SK-N-SH (cell line): ENCODE measurements at regions of chr1 and their contacts with region 1.

Region 1: DNA sequence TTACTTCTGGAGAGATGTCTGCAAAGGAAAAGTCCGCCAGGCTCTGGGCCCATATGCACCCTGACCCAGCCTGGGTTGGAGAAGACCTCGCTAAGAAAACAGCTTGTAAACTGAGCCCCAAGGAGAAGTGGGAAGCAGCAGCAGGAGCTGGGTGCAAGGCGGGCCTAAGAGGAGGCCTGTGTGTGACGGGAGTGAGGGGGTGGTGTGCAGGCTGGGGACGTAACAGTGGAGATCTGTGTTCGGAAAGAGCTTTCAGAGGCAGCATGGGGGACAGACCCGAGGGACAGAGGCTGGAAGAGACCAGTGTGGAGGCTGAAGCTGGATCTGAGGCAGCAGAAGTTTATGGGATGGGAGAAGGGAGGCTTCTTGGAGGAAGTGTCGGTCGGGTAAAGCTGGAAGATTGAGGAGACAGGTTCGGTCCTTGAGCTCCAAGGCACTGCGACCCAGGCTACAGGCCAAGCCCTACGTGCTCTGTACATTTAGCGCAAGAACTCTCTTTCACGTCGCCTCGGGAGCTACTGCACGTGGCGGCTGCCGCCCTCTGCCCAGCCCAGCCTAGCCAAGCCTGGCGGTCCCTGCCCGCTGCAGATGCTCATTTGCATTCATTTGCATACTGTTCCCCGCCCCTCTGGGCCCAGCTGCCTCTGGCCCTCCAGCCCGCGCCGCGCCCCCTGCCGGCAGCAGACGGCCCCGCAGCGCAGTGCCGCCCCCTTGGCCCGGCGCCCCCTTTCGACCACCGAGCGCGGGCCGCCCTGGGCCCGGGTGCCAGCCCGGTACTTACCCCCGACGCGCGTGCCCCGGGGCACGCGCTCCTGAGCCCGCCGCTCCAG is 6.3 kb downstream of the HPCA start:
- DNase-seq: peak; percentile 92
- H3K4me3 ChIP-seq: peak overlapping the region in 1 of 2 experiments; percentile 14; a peak in 3 of 4 replicates
- H3K27ac ChIP-seq: no peak overlapping the region
- H3K4me1 ChIP-seq: peaks cover 0 to 4% of the 10 kb centered on the region in 2 experiments; a peak in 2 of 4 replicates
- H3K27me3 ChIP-seq: 0 out of 2 replicates have a peak, but pooled peaks cover 5% of the 10 kb centered on the region
- CTCF ChIP-seq: peak; percentile 56
- EP300 ChIP-seq: no peak
- RAD21 ChIP-seq: no peak

Region 2: DNA sequence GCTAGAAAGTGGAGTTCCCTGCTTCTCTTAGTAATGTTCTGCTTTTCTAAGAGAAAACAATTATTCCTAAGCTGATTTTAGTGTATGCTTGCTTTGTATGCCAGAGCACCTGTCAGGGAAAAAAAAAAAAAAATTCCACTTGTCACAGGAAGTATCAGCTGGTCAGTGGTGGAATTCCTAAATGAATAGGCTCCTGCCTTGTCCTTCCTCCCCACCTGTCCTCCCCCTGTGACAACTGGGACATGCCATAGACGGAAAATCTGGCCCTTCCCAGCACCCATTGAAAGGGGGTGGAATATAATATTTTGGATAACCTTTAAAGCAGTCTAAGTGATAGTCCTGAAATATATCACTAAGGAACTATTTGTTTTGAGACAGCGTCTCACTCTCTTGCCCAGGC is 32.7 kb before region 1 on chr1:
- CTCF ChIA-PET with region 1: no interaction called
- POLR2A ChIA-PET with region 1: no interaction called
- DNase-seq: no peak
- H3K4me3 ChIP-seq: no peak overlapping the region
- H3K27ac ChIP-seq: no peak overlapping the region
- H3K4me1 ChIP-seq: no peaks in the 10 kb centered on the region
- H3K27me3 ChIP-seq: no peaks in the 10 kb centered on the region
- CTCF ChIP-seq: no peak
- EP300 ChIP-seq: no peak
- RAD21 ChIP-seq: no peak

Region 3: DNA sequence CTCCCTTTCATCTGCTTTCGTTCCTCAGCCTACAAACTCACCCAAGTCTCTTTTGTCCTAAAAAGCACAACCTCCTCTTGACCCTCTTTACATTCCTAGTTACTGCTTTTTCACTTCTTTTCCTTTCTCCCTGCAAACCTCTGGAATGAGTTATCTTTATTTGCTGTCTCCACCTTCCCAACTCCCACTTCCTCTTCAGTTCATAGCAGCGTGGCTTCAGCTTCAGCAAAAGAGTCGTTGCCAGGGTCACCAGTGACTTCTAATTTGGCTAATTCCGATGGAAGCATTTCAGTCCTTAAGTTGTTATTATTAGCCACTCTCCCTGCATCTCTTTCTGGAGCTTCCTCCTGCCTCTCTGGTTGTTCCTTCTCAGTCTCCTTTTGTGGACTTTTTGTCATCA is 14.9 kb after region 1 on chr1:
- CTCF ChIA-PET with region 1: interaction called, 13 read pairs
- POLR2A ChIA-PET with region 1: interaction called, 3 read pairs
- DNase-seq: peak; percentile 6
- H3K4me3 ChIP-seq: no peak overlapping the region
- H3K27ac ChIP-seq: no peak overlapping the region
- H3K4me1 ChIP-seq: no peaks in the 10 kb centered on the region
- H3K27me3 ChIP-seq: peaks cover 3% of the 10 kb centered on the region; the same call in 1 of the 2 replicates
- CTCF ChIP-seq: no peak
- EP300 ChIP-seq: no peak
- RAD21 ChIP-seq: no peak

Region 4: DNA sequence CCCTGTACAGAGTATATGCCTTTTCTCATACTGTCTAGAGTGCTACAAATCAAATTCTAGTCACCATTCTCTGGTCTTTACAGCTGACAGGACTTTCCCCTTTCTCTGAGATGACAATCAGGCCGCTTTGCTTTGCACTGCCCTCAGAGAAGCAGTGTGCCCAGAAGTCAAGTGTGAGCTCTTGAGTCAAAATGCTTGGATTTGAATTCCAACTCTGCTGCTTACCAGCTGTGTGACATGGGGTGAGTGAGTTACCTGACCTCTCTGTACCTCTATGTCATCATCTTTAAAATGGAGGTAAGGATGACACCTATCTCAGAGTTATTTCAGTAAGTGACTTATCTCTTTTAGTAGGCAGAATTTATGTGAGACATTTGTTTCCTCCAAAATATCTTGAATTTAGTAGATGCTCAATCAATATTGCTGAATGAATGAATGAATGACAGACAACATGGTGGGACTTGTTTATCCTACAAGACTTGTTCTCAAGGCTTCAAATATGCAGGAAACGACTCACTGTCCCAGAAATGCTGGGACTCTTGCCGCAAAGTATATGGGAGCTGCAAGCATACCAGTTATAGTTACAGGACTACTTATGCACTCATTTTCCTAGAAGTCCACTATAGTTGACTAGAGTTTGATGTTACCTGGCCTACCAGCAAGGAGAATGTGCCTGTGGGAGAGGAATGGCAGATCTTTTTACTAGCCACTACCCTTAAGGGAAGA is 466.4 kb after region 1 on chr1:
- CTCF ChIA-PET with region 1: no interaction called
- POLR2A ChIA-PET with region 1: no interaction called
- DNase-seq: no peak
- H3K4me3 ChIP-seq: no peak overlapping the region
- H3K27ac ChIP-seq: no peak overlapping the region
- H3K4me1 ChIP-seq: peaks cover 0 to 21% of the 10 kb centered on the region in 2 experiments; a peak in 3 of 4 replicates
- H3K27me3 ChIP-seq: no peaks in the 10 kb centered on the region
- CTCF ChIP-seq: no peak
- EP300 ChIP-seq: no peak
- RAD21 ChIP-seq: no peak